Activated CD4-positive, alpha-beta memory T cell treated with anti-CD3 and anti-CD28 coated beads for 36 hours (primary cell): ENCODE measurements at regions of chr3 and their contacts with region 1.

Region 1: GRCh38 chr3:153291056-153291685 is 129.1 kb downstream of the RAP2B start:
- DNase-seq: no peak
- H3K4me3 Mint-ChIP-seq: no peak overlapping the region
- H3K27ac Mint-ChIP-seq: no peak overlapping the region
- H3K4me1 Mint-ChIP-seq: peaks cover 38% of the 10 kb centered on the region
- H3K27me3 Mint-ChIP-seq: no peaks in the 10 kb centered on the region

Region 2: DNA sequence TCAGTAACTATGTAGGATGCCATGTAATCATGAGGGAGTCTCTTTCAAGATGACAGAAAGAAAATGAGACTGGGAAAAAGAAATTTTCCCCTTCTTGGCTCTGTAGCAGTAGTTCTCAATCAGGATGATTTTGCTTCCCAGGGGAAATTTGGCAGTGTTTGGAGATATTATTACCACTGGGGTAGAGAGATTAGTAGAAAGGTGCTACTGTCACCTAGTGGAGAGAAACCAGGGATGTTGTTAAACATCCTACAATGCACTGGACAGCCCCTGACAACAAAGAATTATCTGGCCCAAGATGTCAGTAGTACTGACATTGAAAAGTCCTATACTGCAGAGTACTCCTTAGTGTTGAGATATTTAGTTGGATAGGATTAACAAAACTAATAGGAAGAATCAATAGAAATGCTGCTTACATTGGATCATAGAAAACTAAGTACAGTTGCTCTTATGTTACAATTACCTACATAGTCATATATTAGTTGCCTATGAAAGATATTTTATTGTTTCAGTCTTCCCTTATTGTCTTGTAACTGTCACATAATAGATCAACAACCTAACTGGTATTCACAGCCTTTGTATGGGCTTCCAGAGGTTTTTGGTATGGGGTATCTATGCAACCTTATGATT is 304.1 kb after region 1 on chr3:
- CTCF ChIA-PET with region 1: interaction called, 3 read pairs
- POLR2A ChIA-PET with region 1: no interaction called
- intact Hi-C with region 1: loop called (anchors 10 kb)
- DNase-seq: no peak
- H3K4me3 Mint-ChIP-seq: no peak overlapping the region
- H3K27ac Mint-ChIP-seq: no peak overlapping the region
- H3K4me1 Mint-ChIP-seq: peaks cover 13% of the 10 kb centered on the region
- H3K27me3 Mint-ChIP-seq: no peaks in the 10 kb centered on the region